Sigmoid colon (tissue), 7 donors: ENCODE measurements at regions of chr15 and their contacts with region 1.

Region 1: DNA sequence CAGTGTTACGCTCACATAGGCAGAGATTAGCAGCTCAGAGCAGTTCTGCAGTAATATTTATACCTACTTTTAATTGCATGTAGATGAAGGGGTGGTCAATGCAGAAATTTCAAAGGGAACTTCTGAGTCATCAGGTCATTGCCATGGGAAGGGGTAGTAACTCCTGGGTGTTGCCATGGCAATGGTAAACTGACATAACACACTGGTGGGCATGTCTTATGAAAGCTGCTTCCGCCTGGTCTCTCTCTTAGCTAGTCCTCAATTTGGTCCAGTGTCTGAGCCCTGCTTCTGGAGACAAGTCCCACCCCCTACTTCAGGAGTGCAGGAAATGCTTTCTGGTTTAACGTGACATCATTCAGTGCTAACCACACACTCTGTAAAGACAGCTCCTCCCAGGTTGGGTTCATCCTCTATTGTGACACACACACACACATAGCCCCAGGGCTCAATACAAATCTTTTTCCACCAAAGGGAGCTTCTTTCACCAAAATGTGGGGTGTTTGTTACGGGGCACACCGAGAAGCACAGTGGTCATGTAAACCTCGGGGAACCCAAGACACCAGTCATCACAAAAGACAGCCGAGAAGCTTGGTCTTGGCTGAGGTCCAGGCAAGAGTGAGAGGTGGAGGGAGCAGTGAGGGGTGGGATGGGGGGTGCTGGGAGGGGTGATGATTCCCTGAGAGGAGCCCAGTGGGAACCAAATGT is 74.5 kb downstream of the TLE3 start:
- DNase-seq: no peak
- H3K4me3 ChIP-seq: no peak overlapping the region
- H3K27ac ChIP-seq: peak overlapping the region; percentile 66 to 78 (median 73)
- H3K4me1 ChIP-seq: peaks cover 0 to 38% (median 38%) of the 10 kb centered on the region in 4 donors
- H3K27me3 ChIP-seq: no peaks in the 10 kb centered on the region
- CTCF ChIP-seq: no peak
- EP300 ChIP-seq: no peak
- POLR2A ChIP-seq: no peak

Region 2: GRCh38 chr15:69703532-69704187 is 319.6 kb before region 1 on chr15:
- intact Hi-C with region 1: loop called (anchors 5 kb)
- DNase-seq: peak; percentile 73
- H3K4me3 ChIP-seq: no peak overlapping the region
- H3K27ac ChIP-seq: peak overlapping the region in 3 of 4 donors; percentile 26 to 66 (median 57)
- H3K4me1 ChIP-seq: peaks cover 0 to 26% (median 17%) of the 10 kb centered on the region in 4 donors
- H3K27me3 ChIP-seq: no peaks in the 10 kb centered on the region
- CTCF ChIP-seq: no peak
- EP300 ChIP-seq: peak in 2 of 4 donors; percentile 38 to 42
- POLR2A ChIP-seq: no peak

Region 3: DNA sequence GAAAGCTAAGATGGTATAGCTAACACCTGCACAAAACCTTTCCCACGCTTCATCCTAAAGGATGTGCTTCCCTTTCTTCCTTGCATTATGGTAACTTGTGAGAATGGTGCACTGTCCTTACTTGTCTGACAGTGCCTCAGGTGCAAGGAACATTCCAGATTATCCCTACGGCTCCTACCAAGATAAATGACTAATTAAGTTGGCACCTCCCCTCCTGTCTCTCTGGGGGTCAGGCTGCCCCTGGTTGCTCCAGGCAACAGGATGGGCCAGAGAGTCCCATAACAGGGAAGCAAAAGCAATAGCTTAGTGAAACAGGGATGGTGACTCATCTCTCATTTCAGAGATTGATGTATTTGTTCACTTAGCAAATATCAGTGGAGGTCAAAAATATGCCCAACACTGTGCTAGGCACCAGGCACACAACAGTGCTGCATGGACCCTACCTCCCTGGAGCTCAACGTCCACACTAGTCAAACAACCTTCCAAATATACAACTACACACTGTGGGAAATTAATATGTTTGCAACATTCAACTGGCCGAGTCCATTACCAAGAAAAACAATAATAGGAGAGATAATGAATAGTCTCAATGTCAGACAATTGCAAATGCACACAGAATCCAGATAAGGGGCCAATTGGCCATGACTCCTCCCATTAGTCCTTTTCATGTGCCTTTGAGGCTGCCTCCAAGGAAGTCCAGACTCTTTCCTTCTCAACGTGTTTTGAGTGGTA is 174.6 kb before region 1 on chr15:
- intact Hi-C with region 1: no loop called
- DNase-seq: no peak
- H3K4me3 ChIP-seq: no peak overlapping the region
- H3K27ac ChIP-seq: no peak overlapping the region
- H3K4me1 ChIP-seq: no peaks in the 10 kb centered on the region
- H3K27me3 ChIP-seq: no peaks in the 10 kb centered on the region
- CTCF ChIP-seq: no peak
- EP300 ChIP-seq: no peak
- POLR2A ChIP-seq: no peak

Region 4: DNA sequence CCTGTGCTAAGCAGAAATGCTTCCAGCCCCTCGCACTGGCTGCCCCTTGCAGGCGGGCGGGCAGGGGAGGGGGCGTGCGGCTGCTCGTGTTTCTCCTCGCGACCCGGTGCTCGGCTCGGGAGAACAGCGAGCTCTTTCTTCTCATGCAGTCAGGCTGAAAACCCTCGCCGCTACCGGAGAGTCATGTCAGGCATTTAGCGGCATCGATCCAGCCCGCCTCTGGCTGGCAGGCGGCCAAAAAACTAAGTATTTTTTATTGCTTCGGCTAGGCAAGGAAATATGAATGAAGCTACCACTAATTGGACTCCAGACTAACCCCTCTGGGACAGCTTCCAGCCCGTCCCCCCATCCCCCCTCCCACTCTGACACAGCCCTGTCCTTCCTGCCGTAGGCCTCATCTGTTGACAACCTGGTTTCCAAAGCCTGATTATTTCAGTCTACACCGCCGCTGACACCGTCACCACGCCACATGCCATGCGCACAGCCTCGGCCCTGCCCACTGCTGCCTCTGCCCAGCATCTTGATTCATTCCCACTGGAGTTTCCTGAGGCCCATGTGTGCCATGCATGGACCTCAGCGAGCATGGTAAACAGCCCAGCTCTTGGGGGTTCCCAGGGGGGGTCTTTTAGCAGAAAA is 39.2 kb after region 1 on chr15:
- intact Hi-C with region 1: loop called (anchors 5 kb)
- DNase-seq: peak; percentile 90
- H3K4me3 ChIP-seq: peak overlapping the region in 2 of 4 donors; percentile 11 to 25
- H3K27ac ChIP-seq: peak overlapping the region; percentile 28 to 79 (median 66)
- H3K4me1 ChIP-seq: peaks cover 0 to 74% (median 51%) of the 10 kb centered on the region in 4 donors
- H3K27me3 ChIP-seq: no peaks in the 10 kb centered on the region
- CTCF ChIP-seq: no peak
- EP300 ChIP-seq: no peak
- POLR2A ChIP-seq: no peak

Region 5: GRCh38 chr15:70083946-70084345 is 60.7 kb after region 1 on chr15:
- intact Hi-C with region 1: no loop called
- DNase-seq: no peak
- H3K4me3 ChIP-seq: no peak overlapping the region
- H3K27ac ChIP-seq: peak overlapping the region in 1 of 4 donors; percentile 32
- H3K4me1 ChIP-seq: peaks cover 0 to 61% (median 37%) of the 10 kb centered on the region in 4 donors
- H3K27me3 ChIP-seq: no peaks in the 10 kb centered on the region
- CTCF ChIP-seq: no peak
- EP300 ChIP-seq: no peak
- POLR2A ChIP-seq: no peak

Region 6: GRCh38 chr15:70094690-70095311 is 71.6 kb after region 1 on chr15:
- intact Hi-C with region 1: no loop called
- DNase-seq: no peak
- H3K4me3 ChIP-seq: peak overlapping the region; percentile 85 to 97 (median 94)
- H3K27ac ChIP-seq: peak overlapping the region; percentile 93 to 99 (median 99)
- H3K4me1 ChIP-seq: peaks cover 2 to 76% (median 66%) of the 10 kb centered on the region in 4 donors
- H3K27me3 ChIP-seq: no peaks in the 10 kb centered on the region
- CTCF ChIP-seq: no peak
- EP300 ChIP-seq: no peak
- POLR2A ChIP-seq: no peak

Region 7: GRCh38 chr15:70362886-70363285 is 339.7 kb after region 1 on chr15:
- intact Hi-C with region 1: loop called (anchors 10 kb)
- DNase-seq: peak; percentile 71
- H3K4me3 ChIP-seq: no peak overlapping the region
- H3K27ac ChIP-seq: no peak overlapping the region
- H3K4me1 ChIP-seq: peaks cover 0 to 9% (median 0%) of the 10 kb centered on the region in 4 donors
- H3K27me3 ChIP-seq: no peaks in the 10 kb centered on the region
- CTCF ChIP-seq: peak; percentile 52 to 67 (median 57)
- EP300 ChIP-seq: no peak
- POLR2A ChIP-seq: no peak